ENCODE measurements at regions of chr1 and their contacts with region 1.

Region 1: GRCh38 chr1:10663678-10664035 is 132.8 kb downstream of the CASZ1 start:
- DNase-seq: no peak
- H3K4me3 ChIP-seq: no peak overlapping the region
- CTCF ChIP-seq: no peak
- POLR2A ChIP-seq: no peak

Region 2: GRCh38 chr1:10510520-10511493 is 152.8 kb before region 1 on chr1:
- intact Hi-C with region 1: no loop called
- DNase-seq: no peak
- H3K4me3 ChIP-seq: no peak overlapping the region
- CTCF ChIP-seq: no peak
- POLR2A ChIP-seq: no peak

Region 3: GRCh38 chr1:10728595-10729410 is 65.1 kb after region 1 on chr1:
- intact Hi-C with region 1: loop called (anchors 1 kb)
- DNase-seq: no peak
- H3K4me3 ChIP-seq: no peak overlapping the region
- CTCF ChIP-seq: no peak
- POLR2A ChIP-seq: no peak

Region 4: GRCh38 chr1:12132092-12132491 is 1468.4 kb after region 1 on chr1:
- intact Hi-C with region 1: no loop called
- DNase-seq: no peak
- H3K4me3 ChIP-seq: no peak overlapping the region
- CTCF ChIP-seq: no peak
- POLR2A ChIP-seq: no peak

Measured in lower leg skin (tissue), 4 donors.